MCF 10A (cell line): ENCODE measurements at regions of chr12 and their contacts with region 1.

Region 1: DNA sequence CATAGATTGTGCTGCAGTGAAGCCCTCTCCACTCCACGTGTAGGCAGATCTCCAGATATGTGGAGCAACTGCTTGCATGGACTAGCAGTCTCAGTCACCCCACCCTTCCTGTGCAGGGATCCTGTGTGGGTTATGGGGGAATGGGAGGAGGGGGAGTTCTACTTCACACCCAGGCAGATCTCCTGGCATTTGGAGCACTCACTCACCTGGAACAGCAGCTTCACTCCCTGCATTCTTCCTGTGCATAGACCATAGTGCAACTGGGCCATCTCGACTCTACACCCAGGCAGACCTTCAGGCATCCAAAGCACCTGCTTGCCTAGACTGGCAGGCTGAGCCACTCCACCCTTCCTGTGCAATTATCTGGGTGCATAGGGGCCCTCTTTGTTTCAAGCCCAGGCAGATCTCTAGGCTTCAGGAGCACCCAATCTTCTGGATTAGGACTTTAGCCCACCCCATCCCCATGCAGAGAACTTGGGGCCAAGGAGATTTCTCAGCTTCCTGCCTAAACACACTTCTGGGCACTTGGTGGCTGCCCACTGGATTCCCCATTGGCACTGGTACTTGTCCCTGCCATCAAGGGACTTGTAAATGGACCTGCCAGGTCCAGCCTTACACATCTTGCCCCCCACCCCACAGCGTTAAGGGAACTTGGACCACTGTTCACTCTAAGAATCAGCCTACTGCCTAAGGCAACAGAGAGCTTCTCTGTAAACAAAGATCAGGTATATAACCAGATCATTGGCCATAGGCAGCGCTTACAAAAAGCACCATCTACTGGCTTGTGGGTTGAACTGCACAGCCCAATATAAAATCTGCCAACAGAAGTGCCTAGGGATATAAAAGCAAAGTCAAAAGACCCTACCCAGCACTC is 95.8 kb upstream of the PCED1B start:
- DNase-seq: peak; percentile 72
- H3K4me3 Mint-ChIP-seq: no peak overlapping the region
- H3K27ac Mint-ChIP-seq: peak overlapping the region; percentile 28
- H3K4me1 Mint-ChIP-seq: peaks cover 13% of the 10 kb centered on the region
- H3K27me3 Mint-ChIP-seq: no peaks in the 10 kb centered on the region
- CTCF ChIP-seq: peak; percentile 90

Region 2: GRCh38 chr12:46071769-46072624 is 911.6 kb before region 1 on chr12:
- CTCF ChIA-PET with region 1: interaction called, 3 read pairs
- POLR2A ChIA-PET with region 1: interaction called, 4 read pairs
- intact Hi-C with region 1: loop called (anchors 1 kb)
- DNase-seq: peak; percentile 87
- H3K4me3 Mint-ChIP-seq: no peak overlapping the region
- H3K27ac Mint-ChIP-seq: peak overlapping the region; percentile 47
- H3K4me1 Mint-ChIP-seq: peaks cover 20% of the 10 kb centered on the region
- H3K27me3 Mint-ChIP-seq: no peaks in the 10 kb centered on the region
- CTCF ChIP-seq: peak; percentile 95

Region 3: DNA sequence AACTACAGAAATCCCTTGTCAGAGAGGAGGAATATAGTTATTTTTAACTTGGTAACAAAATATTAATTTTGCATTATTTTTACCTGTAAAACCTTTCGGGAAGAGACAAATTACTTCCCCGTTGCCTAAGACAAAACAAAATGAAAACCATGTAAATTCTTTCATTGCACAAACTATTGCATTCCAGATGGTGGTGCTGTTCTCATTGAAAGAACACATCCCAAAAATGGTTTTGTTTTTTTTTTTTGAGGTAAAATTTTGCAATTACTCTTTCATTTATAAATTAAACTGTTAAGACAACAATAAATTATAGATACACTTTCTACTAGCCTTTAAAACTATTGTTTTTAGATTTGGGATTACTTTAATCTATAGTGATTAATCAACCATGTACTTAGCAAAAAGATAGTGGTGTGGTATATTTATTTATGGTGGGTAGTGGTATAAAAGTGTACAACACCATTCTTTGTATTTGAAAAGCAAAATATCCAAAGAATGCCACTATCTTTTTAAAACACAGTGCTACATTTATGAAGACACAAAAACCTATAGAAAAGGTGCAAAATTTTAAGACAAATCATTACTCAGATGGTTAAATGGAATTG is 830.3 kb before region 1 on chr12:
- CTCF ChIA-PET with region 1: no interaction called
- POLR2A ChIA-PET with region 1: no interaction called
- intact Hi-C with region 1: loop called (anchors 1 kb)
- DNase-seq: peak; percentile 46
- H3K4me3 Mint-ChIP-seq: no peak overlapping the region
- H3K27ac Mint-ChIP-seq: no peak overlapping the region
- H3K4me1 Mint-ChIP-seq: peaks cover 5% of the 10 kb centered on the region
- H3K27me3 Mint-ChIP-seq: no peaks in the 10 kb centered on the region
- CTCF ChIP-seq: peak; percentile 77

Region 4: DNA sequence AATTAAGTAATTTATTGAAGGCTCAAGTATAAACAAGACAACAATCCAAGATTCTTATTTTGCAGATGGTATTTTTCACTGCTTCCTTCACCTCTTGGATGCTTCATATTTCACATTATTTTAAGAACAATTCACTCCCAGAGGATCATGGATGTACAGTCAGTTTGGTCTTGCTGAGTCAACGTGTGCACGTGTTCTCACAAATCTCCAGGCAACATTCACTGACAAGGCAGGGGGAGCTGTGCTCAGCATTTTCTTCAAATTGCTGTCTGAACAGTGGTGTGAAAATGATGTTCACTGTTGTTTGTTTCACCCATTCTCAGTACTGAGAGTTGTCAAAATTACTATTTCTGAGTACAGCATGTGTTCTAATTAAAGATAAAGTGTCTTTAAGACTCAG is 39.5 kb before region 1 on chr12:
- CTCF ChIA-PET with region 1: interaction called, 52 read pairs
- POLR2A ChIA-PET with region 1: interaction called, 9 read pairs
- intact Hi-C with region 1: loop called (anchors 5 kb)
- DNase-seq: peak; percentile 69
- H3K4me3 Mint-ChIP-seq: no peak overlapping the region
- H3K27ac Mint-ChIP-seq: no peak overlapping the region
- H3K4me1 Mint-ChIP-seq: peaks cover 6% of the 10 kb centered on the region
- H3K27me3 Mint-ChIP-seq: no peaks in the 10 kb centered on the region
- CTCF ChIP-seq: no peak

Region 5: DNA sequence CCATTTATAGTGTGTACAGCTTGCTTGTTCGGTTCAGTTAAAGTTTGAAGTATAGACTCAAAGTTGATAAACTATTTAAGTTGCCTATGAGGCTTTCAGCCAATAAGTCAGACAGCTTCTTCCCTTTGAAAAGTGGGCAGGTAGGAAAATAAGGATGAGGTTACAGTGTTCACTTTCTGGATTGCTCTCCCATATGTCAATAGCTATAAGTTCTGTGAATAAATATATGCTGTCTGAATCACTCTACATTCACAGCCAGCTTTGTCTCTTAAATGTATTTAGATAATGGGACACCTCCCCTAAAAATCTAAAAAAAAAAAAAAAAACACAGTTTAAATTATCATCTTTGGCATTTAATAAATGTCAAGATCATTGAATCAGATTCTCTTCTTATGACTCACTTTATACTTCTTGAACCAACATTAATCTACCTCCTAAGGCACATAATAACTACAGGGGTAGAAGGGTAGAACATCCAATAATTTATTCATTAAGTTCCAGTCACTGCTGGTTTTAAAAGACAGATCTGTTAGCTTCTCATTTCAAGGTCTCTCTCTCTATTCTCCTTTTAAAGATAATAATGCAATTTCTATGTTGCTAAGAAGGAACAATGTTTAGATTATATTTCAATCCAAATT is 30.6 kb before region 1 on chr12:
- CTCF ChIA-PET with region 1: interaction called, 10 read pairs
- POLR2A ChIA-PET with region 1: interaction called, 3 read pairs
- intact Hi-C with region 1: no loop called
- DNase-seq: no peak
- H3K4me3 Mint-ChIP-seq: no peak overlapping the region
- H3K27ac Mint-ChIP-seq: no peak overlapping the region
- H3K4me1 Mint-ChIP-seq: no peaks in the 10 kb centered on the region
- H3K27me3 Mint-ChIP-seq: no peaks in the 10 kb centered on the region
- CTCF ChIP-seq: no peak

Region 6: GRCh38 chr12:47021298-47021697 is 37.7 kb after region 1 on chr12:
- CTCF ChIA-PET with region 1: interaction called, 6 read pairs
- POLR2A ChIA-PET with region 1: interaction called, 3 read pairs
- intact Hi-C with region 1: loop called (anchors 1 kb)
- DNase-seq: peak; percentile 86
- H3K4me3 Mint-ChIP-seq: no peak overlapping the region
- H3K27ac Mint-ChIP-seq: no peak overlapping the region
- H3K4me1 Mint-ChIP-seq: peaks cover 34% of the 10 kb centered on the region
- H3K27me3 Mint-ChIP-seq: no peaks in the 10 kb centered on the region
- CTCF ChIP-seq: peak; percentile 57